ENCODE measurements at regions of chr16 and their contacts with region 1.

Region 1: DNA sequence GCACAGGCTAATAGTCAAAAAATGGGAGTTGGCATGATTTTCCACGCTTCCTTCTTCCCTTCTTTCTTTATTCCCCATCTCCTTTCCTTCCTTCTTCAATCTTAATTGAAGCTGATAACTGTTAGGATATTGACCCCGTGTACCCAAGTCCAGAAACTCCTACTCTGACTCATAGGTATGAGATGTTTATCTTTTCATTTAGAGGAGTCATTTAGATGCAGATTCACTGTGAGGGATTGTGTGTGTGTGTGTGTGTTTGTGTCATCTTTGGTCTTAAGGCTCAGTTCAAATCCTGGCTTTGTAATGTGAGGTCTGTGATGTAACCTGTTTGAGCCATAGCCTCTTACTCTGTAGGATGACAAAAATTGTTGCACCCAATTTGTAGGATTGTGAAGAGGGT is 332.0 kb upstream of the MAF start:
- DNase-seq: peak; percentile 58
- H3K4me3 ChIP-seq: no peak overlapping the region
- H3K27ac ChIP-seq: no peak overlapping the region
- H3K4me1 ChIP-seq: no peaks in the 10 kb centered on the region
- H3K27me3 ChIP-seq: no peaks in the 10 kb centered on the region
- CTCF ChIP-seq: no peak

Region 2: DNA sequence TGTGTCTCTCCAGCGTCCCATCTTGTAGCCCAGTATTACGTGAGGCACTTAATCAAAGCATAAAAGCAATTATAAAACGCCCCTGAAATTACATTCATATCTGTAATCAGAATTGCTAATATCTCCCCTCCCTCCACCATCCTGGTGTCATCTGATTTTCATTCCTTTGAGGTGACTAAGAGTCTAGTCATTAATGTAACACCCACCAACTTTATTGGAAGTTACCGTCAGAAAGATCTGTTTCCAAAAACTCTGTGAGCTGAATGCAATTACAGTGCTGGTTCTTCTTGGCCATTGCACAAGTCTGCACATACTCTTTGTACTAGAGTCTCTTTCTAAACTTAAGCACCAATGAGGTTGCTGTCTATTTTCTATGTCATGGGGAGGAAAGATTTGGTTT is 319.6 kb before region 1 on chr16:
- CTCF ChIA-PET with region 1: no interaction called
- dilution Hi-C with region 1: no loop called
- in situ Hi-C with region 1: no loop called
- intact Hi-C with region 1: no loop called
- DNase-seq: peak; percentile 65
- H3K4me3 ChIP-seq: no peak overlapping the region
- H3K27ac ChIP-seq: peak overlapping the region; percentile 37
- H3K4me1 ChIP-seq: peaks cover 40% of the 10 kb centered on the region
- H3K27me3 ChIP-seq: no peaks in the 10 kb centered on the region
- CTCF ChIP-seq: no peak

Region 3: GRCh38 chr16:79845033-79845733 is 87.4 kb before region 1 on chr16:
- CTCF ChIA-PET with region 1: interaction called, 3 read pairs
- dilution Hi-C with region 1: loop called (anchors 5 kb)
- in situ Hi-C with region 1: no loop called
- intact Hi-C with region 1: no loop called
- DNase-seq: no peak
- H3K4me3 ChIP-seq: no peak overlapping the region
- H3K27ac ChIP-seq: no peak overlapping the region
- H3K4me1 ChIP-seq: peaks cover 7% of the 10 kb centered on the region
- H3K27me3 ChIP-seq: no peaks in the 10 kb centered on the region
- CTCF ChIP-seq: no peak